GM13976 (cell line): ENCODE measurements at regions of chr11 and their contacts with region 1.

Region 1: GRCh38 chr11:122796128-122796717 is 42.1 kb upstream of the CRTAM start:
- DNase-seq: peak; percentile 67
- CTCF ChIP-seq: peak; percentile 85

Region 2: GRCh38 chr11:122617297-122617696 is 178.9 kb before region 1 on chr11:
- in situ Hi-C with region 1: no loop called
- DNase-seq: no peak
- CTCF ChIP-seq: no peak

Region 3: GRCh38 chr11:122853971-122854446 is 57.8 kb after region 1 on chr11:
- in situ Hi-C with region 1: loop called (anchors 5 kb)
- DNase-seq: no peak
- CTCF ChIP-seq: peak; percentile 54

Region 4: GRCh38 chr11:122937983-122938382 is 141.8 kb after region 1 on chr11:
- in situ Hi-C with region 1: no loop called
- DNase-seq: no peak
- CTCF ChIP-seq: no peak